Activated CD4-positive, alpha-beta T cell treated with anti-CD3 and anti-CD28 coated beads for 36 hours (primary cell): ENCODE measurements at regions of chr18 and their contacts with region 1.

Region 1: DNA sequence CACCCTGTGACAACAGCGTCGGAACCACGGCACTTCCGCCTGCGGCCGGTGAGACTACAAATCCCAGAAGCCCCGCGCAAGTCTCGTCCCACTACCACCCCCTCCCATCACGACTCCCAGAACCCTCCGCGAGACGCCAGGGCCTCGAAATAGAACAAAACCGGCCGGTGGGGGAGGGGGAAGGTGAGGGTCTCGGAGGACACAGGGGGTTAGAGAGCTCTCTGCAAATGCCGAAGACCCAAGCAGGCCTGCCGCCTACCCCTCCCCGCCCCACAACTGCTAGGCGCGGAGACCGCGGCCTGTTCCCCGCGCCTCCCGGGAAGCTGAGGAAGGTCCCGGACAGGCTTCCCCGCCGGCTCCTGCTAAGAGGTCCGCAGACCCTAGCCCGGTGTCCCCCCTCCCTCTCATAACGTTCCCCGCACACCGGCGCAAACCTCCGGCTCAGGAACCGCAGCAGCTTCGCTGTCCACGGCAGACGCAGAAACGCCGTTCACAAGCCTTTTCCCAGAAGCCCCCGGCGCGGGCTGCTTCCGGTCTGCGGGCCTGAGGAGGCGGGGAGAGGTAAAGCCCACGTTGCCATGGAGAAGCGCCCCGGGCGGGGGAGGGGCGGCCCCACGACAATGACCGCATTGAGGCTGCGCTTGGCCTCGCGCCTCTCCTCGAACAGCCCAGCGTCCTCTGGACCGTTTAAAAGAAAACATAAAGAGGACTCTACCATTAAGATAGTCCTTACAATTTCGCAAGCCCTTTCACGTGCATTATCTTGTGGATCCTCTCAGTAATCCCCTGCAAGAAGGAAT is at the start of gene ZNF24:
- DNase-seq: peak; percentile 96
- ATAC-seq: peak; percentile 93
- H3K4me3 Mint-ChIP-seq: peak within 1 kb of the TSS; percentile 86
- H3K27ac Mint-ChIP-seq: peak within 1 kb of the TSS; percentile 94
- H3K4me1 Mint-ChIP-seq: peaks cover 38% of the 10 kb centered on the region
- H3K27me3 Mint-ChIP-seq: no peaks in the 10 kb centered on the region
- total RNA-seq, gene ZNF24: 31.7 to 50.9 TPM

Region 2: GRCh38 chr18:34990571-34990970 is 353.6 kb before region 1 on chr18:
- CTCF ChIA-PET with region 1: no interaction called
- POLR2A ChIA-PET with region 1: no interaction called
- intact Hi-C with region 1: no loop called
- DNase-seq: no peak
- ATAC-seq: no peak
- H3K4me3 Mint-ChIP-seq: no peak overlapping the region
- H3K27ac Mint-ChIP-seq: no peak overlapping the region
- H3K4me1 Mint-ChIP-seq: peaks cover 6% of the 10 kb centered on the region
- H3K27me3 Mint-ChIP-seq: no peaks in the 10 kb centered on the region

Region 3: DNA sequence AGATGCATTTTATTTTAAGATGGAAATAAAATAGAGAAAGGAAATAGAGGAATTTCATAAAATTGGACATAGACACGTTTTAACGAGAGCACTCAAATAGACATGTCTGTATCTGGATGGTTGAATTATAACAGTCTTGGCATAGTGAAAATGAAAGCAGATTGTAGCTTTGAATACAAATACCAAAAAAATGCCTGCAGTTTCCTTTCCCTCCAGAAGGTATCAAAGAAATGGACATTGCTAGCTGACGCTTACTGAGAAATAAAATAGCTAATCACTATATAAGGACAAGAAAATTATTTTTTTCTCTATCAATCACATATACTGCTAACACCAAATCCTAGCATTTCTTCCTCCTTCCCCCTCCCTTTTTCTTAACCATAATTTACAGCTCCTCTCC is 314.4 kb before region 1 on chr18:
- CTCF ChIA-PET with region 1: no interaction called
- POLR2A ChIA-PET with region 1: no interaction called
- intact Hi-C with region 1: loop called in 1 of 2 experiments (anchors 5 kb)
- DNase-seq: no peak
- ATAC-seq: peak; percentile 67
- H3K4me3 Mint-ChIP-seq: peak overlapping the region; percentile 69
- H3K27ac Mint-ChIP-seq: peak overlapping the region; percentile 96
- H3K4me1 Mint-ChIP-seq: peaks cover 61% of the 10 kb centered on the region
- H3K27me3 Mint-ChIP-seq: no peaks in the 10 kb centered on the region

Region 4: DNA sequence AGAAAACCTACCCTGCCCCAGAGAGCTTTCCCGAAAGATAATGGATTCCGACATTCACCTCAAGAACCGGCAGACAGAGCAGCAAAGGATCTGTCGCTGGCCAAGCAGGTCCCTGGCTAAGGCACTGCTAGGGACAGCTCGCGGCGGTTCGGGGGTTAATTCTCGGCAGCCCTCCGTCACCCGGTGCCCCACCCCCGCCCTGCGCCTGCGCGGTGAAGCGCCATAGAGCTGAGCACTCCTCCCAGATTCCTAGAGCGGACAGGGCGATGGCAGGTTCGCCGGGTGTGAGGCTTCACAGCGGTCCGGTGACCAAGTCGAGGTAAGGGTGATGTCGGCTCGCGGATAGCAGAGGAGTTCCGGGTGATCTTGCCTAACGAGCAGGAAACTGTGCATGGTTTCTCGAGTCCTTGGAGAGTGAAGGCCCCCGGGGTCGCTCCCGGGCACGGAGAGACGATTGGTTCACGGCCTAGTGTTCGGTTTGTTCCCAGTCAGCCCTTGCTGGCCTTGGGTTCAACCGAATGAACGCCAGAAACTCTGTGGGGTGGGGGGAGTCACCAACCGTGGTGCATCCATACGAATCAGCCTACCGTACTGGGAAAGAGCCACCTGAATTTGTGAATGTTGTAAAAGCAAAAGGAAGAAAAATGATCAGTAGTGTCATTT is 53.9 kb before region 1 on chr18 and contains the start of gene ZSCAN30:
- CTCF ChIA-PET with region 1: interaction called, 4 read pairs
- POLR2A ChIA-PET with region 1: interaction called, 3 read pairs
- intact Hi-C with region 1: loop called (anchors 1 kb)
- DNase-seq: peak; percentile 97
- ATAC-seq: peak; percentile 97
- H3K4me3 Mint-ChIP-seq: peak within 1 kb of the TSS; percentile 96
- H3K27ac Mint-ChIP-seq: peak within 1 kb of the TSS; percentile 96
- H3K4me1 Mint-ChIP-seq: peaks cover 45% of the 10 kb centered on the region
- H3K27me3 Mint-ChIP-seq: no peaks in the 10 kb centered on the region
- total RNA-seq, gene ZSCAN30: 24.2 to 25.4 TPM

Region 5: GRCh38 chr18:35376742-35377695 is 32.9 kb after region 1 on chr18 and contains the start of gene ZNF396:
- CTCF ChIA-PET with region 1: interaction called, 4 read pairs
- POLR2A ChIA-PET with region 1: no interaction called
- intact Hi-C with region 1: loop called in 1 of 2 experiments (anchors 1 kb)
- DNase-seq: peak; percentile 81
- ATAC-seq: peak; percentile 79
- H3K4me3 Mint-ChIP-seq: peak within 1 kb of the TSS; percentile 71
- H3K27ac Mint-ChIP-seq: peak within 1 kb of the TSS; percentile 19
- H3K4me1 Mint-ChIP-seq: peaks cover 10% of the 10 kb centered on the region
- H3K27me3 Mint-ChIP-seq: no peaks in the 10 kb centered on the region
- total RNA-seq, gene ZNF396: 0.47 to 1.1 TPM

Region 6: GRCh38 chr18:36129300-36130038 is 785.3 kb after region 1 on chr18 and contains the starts of genes ELP2 and SLC39A6:
- CTCF ChIA-PET with region 1: no interaction called
- POLR2A ChIA-PET with region 1: no interaction called
- intact Hi-C with region 1: loop called in 1 of 2 experiments (anchors 1 kb)
- DNase-seq: peak; percentile 97
- ATAC-seq: peak; percentile 94
- H3K4me3 Mint-ChIP-seq: peak within 1 kb of the TSS; percentile 92
- H3K27ac Mint-ChIP-seq: peak within 1 kb of the TSS; percentile 95
- H3K4me1 Mint-ChIP-seq: peaks cover 57% of the 10 kb centered on the region
- H3K27me3 Mint-ChIP-seq: no peaks in the 10 kb centered on the region
- total RNA-seq, gene ELP2: 76.5 to 114 TPM
- total RNA-seq, gene SLC39A6: 23.9 to 28.6 TPM